ENCODE measurements at regions of chr6 and their contacts with region 1.

Region 1: GRCh38 chr6:42547407-42548329 is 16.2 kb upstream of the UBR2 start:
- DNase-seq: peak; percentile 88

Region 2: GRCh38 chr6:42158011-42158410 is 389.7 kb before region 1 on chr6:
- CTCF ChIA-PET with region 1: no interaction called
- POLR2A ChIA-PET with region 1: no interaction called
- DNase-seq: no peak

Region 3: DNA sequence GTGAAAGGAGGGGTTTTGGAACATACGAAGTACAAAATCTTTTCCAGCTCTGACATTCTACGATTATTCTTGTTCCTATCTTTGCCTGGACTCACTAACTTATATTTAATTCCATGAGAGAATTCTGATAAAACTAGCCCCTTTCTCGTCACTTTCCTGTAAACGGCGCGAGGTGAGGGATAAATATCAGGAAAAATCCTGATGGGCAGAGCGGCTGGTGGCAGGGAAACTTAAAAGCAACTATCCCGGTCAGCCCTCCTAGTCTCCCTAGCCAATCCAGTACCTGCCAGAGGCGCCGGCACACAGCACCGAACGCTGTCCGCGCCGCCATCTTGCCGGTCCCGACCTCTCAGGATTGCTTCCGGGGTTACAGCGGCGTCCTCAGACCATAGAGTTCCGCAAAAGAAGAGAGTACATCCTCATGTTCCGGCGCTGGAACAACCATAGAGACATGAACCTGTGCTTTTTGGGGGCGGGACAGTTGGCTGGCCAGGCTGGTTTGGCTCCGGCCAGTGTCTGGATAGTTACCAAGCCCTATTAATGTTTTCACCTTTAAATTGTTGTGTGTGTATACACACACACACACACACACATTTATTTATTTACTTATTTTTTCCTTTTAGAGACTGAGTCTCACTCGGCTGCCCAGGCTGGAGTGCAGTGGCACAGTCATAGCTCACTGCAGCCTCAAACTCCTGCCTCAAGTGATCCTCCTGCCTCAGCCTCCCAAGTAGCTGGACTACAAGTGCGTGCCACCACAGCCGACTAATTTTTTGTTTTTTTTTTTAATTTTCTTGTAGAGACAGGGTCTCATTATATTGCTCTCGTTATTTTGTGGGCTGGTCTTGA is 329.9 kb before region 1 on chr6 and contains the start of gene MRPS10:
- CTCF ChIA-PET with region 1: interaction called, 14 read pairs
- POLR2A ChIA-PET with region 1: interaction called, 5 read pairs
- DNase-seq: peak; percentile 89

Region 4: DNA sequence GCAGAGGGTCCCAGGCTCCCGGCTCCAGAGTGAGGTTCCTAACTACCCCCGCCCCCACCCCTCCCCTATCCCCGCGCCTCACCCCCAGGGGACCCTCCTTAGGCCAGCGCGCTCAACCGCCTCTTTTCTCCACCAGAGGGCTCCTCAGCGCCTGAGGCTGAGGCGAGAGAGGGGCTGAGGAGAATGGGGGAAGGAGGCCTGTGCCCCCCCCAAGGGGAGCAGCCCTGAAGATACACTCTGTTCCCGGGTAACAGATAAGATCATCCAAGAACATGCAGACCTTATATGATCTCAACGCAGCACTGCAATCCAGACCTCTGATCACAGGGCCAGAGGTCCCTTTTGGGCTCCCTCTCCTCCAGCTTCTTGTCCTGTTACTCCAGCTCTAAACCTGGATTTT is 286.7 kb before region 1 on chr6:
- CTCF ChIA-PET with region 1: interaction called, 41 read pairs
- POLR2A ChIA-PET with region 1: interaction called, 12 read pairs
- DNase-seq: peak; percentile 67

Region 5: GRCh38 chr6:42453031-42453653 is 94.5 kb before region 1 on chr6:
- CTCF ChIA-PET with region 1: interaction called, 11 read pairs
- POLR2A ChIA-PET with region 1: interaction called, 27 read pairs
- DNase-seq: peak; percentile 85

Region 6: GRCh38 chr6:42537536-42537935 is 10.1 kb before region 1 on chr6:
- CTCF ChIA-PET with region 1: interaction called, 26 read pairs
- POLR2A ChIA-PET with region 1: interaction called, 12 read pairs
- DNase-seq: no peak

Region 7: DNA sequence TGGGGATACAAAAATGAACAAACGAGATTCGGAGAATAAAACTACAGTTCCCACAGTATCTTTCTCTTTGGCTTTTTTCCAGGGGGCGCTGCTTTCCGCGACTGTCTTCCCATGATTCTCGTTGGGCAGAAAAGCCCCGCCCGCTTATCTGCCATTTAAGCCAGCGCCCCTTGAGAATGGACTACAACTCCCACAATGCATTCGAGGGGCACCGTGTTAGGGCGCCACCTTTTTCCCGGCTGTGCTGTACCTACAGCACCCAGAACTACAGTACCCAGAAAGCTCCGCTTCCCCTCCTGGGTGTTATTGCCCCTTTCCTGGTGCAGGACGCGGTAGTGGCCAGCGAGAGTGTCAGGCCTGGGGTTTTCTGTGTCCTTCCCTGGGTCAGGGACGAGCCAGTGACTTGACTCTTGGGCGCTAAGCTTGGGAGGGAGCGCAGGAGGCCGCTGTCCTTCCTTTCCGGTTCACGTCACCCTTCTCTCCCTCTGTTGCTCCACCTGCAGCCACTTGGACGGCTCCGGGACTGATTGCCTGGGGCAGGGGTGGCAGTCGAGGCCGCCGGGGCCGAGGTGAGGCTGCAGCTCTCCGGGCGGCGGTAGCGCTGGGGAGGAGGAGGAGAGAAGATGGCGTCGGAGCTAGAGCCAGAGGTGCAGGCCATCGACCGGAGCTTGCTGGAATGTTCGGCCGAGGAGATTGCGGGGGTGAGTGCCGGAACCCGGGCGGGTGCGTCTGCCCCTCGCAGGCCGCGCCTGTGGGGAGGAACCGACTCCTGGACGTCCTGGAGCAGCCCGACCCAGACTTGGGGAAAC is 16.2 kb after region 1 on chr6 and contains the start of gene UBR2:
- CTCF ChIA-PET with region 1: interaction called, 32 read pairs
- POLR2A ChIA-PET with region 1: interaction called, 30 read pairs
- DNase-seq: peak; percentile 91

Region 8: DNA sequence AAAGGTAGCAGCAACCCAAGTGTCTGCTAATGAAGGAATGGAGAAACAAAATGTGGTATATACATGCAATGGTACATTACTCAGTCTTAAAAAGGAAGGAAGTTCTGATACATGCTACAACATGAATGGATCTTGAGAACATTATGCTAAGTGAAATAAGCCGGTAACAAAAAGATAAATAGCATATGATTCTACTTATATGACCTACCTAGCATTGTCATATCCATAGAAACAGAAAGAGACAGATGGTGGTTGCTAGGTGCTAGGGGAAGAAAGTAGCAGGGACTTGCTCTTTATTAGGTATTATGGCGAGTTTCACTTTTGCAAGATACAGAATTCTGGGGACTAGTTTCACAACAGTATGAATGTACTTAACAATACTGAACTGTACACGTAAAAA is 62.7 kb after region 1 on chr6:
- CTCF ChIA-PET with region 1: no interaction called
- POLR2A ChIA-PET with region 1: no interaction called
- DNase-seq: no peak

Measured in HEK293T (cell line).